ENCODE measurements at regions of chr1 and their contacts with region 1.

Region 1: DNA sequence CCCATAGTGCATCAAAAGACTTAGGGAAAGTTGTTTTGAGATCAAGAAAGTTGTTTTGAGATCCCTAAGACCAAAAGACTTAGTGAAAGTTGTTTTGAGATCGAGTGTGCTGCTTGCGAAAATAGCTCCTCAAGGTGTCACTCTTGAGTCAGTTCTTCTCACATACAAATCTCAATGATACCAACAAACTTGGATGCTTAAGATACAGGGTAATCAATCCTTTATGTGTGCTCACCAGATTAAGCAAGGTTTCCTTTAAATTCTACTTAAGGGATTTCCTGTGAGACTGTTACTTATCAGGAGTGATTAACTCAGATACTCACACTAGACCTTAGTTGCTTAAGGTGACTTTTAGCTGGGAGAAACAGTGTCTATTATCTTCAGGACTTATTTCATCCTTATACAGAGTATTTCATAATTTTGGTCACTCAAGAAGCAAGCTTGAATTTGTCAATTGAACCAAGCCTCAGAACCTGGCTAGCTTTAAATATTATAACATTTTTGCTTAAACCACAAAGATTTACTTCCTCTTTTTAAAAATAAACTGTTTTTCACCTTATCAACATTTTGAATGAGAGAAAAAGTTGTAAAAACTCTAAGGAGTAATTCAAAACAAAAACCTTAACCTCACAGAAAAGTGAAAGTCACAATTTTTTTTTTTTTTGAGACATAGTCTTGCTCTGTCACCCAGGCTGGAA is 8.0 kb upstream of the RLF start:
- DNase-seq: peak; percentile 52
- ATAC-seq: peak; percentile 82
- H3K4me3 Mint-ChIP-seq: peak overlapping the region; percentile 34
- H3K27ac Mint-ChIP-seq: peak overlapping the region; percentile 28
- H3K4me1 Mint-ChIP-seq: peaks cover 7% of the 10 kb centered on the region
- H3K27me3 Mint-ChIP-seq: no peaks in the 10 kb centered on the region
- CTCF ChIP-seq: peak; percentile 74

Region 2: DNA sequence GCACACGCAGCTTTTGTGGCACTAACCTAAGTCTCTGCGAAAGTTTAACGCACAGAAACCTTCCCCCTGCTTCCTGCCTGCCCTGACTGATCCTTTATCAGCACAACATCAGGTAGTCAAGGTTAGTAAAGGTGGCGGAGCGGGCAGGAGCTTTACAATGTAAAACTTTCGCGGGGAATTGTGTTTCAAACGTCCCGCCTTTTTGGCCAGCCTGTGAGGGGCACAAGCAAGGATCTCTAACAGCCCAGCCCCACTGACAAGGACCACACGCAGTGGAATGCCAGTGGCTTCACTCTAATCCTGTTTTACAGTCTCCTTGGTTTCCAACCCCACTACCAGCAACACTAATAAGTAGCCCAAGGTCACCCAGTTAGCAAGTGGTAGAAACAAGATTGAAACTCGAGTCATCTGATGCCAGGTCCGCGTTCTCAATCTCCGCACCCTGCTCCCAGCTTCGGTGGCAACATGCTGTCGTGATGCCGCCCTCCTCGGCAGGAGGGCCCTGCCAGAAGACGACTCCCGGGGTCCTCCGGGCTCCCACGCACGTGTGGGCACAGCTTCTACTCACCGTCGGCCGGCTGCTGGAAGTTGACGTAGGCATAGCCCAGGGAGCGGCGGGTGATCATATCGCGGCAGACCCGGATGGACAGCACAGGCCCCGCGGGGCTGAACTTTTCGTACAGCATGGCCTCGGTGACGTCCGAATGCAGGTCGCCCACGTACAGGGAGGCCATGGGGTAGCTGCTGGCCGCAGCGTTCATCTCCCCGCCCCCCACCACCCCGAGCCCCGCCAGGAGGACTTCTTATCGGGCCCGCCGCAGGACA is 577.8 kb before region 1 on chr1:
- CTCF ChIA-PET with region 1: no interaction called
- POLR2A ChIA-PET with region 1: no interaction called
- intact Hi-C with region 1: no loop called
- DNase-seq: peak; percentile 74
- ATAC-seq: peak; percentile 42
- H3K4me3 Mint-ChIP-seq: peak overlapping the region; percentile 86
- H3K27ac Mint-ChIP-seq: peak overlapping the region; percentile 91
- H3K4me1 Mint-ChIP-seq: peaks cover 42% of the 10 kb centered on the region
- H3K27me3 Mint-ChIP-seq: no peaks in the 10 kb centered on the region
- CTCF ChIP-seq: no peak

Region 3: DNA sequence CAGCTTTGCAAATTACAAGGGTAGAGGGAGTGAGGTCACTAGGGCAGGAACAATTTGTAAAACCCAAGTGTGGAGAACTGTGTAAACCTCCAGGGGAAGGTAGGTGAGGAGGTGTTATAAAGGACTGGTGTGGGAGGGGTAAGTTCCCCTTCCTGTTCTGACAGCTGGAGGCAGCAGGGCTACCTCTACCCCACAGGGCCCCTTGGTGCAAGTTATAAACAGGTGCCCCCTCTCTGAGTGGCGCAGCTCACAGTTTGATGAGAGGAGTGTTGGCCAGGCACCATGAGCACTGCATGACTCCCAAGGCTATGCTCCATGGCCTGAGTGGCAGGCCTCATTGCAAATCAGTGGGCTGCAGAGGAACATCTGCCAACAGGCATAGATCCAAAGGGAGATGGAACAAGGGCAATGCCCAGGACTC is 157.2 kb before region 1 on chr1:
- CTCF ChIA-PET with region 1: no interaction called
- POLR2A ChIA-PET with region 1: no interaction called
- intact Hi-C with region 1: no loop called
- DNase-seq: peak; percentile 41
- ATAC-seq: peak; percentile 97
- H3K4me3 Mint-ChIP-seq: no peak overlapping the region
- H3K27ac Mint-ChIP-seq: no peak overlapping the region
- H3K4me1 Mint-ChIP-seq: peaks cover 17% of the 10 kb centered on the region
- H3K27me3 Mint-ChIP-seq: no peaks in the 10 kb centered on the region
- CTCF ChIP-seq: no peak

Region 4: GRCh38 chr1:40171036-40171435 is 17.8 kb after region 1 on chr1:
- CTCF ChIA-PET with region 1: interaction called, 22 read pairs
- POLR2A ChIA-PET with region 1: no interaction called
- intact Hi-C with region 1: no loop called
- DNase-seq: no peak
- ATAC-seq: no peak
- H3K4me3 Mint-ChIP-seq: no peak overlapping the region
- H3K27ac Mint-ChIP-seq: no peak overlapping the region
- H3K4me1 Mint-ChIP-seq: peaks cover 46% of the 10 kb centered on the region
- H3K27me3 Mint-ChIP-seq: no peaks in the 10 kb centered on the region
- CTCF ChIP-seq: no peak

Region 5: DNA sequence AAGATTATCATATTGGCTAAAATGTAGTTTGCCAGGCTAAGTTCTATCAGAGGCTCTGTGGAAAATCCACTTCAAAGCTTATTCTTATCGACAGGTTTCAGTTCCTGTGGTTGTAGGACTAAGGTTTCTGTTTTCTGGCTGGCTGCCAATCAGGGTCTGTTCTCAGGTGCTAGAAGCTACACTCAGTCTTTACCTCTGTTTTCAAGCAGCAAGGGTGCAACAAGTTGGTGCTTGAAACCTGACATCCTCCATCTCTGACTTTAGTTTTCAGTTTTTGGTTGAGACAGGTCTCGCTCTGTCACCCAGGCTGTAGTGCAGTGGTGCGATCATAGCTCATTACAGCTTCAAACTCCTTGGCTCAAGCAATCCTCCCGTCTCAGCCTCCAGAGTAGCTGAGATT is 79.2 kb after region 1 on chr1:
- CTCF ChIA-PET with region 1: interaction called, 11 read pairs
- POLR2A ChIA-PET with region 1: no interaction called
- intact Hi-C with region 1: no loop called
- DNase-seq: peak; percentile 88
- ATAC-seq: peak; percentile 91
- H3K4me3 Mint-ChIP-seq: no peak overlapping the region
- H3K27ac Mint-ChIP-seq: peak overlapping the region; percentile 28
- H3K4me1 Mint-ChIP-seq: peaks cover 32% of the 10 kb centered on the region
- H3K27me3 Mint-ChIP-seq: no peaks in the 10 kb centered on the region
- CTCF ChIP-seq: no peak

Region 6: GRCh38 chr1:40281853-40282252 is 128.6 kb after region 1 on chr1:
- CTCF ChIA-PET with region 1: interaction called, 18 read pairs
- POLR2A ChIA-PET with region 1: no interaction called
- intact Hi-C with region 1: no loop called
- DNase-seq: no peak
- ATAC-seq: no peak
- H3K4me3 Mint-ChIP-seq: no peak overlapping the region
- H3K27ac Mint-ChIP-seq: no peak overlapping the region
- H3K4me1 Mint-ChIP-seq: no peaks in the 10 kb centered on the region
- H3K27me3 Mint-ChIP-seq: no peaks in the 10 kb centered on the region
- CTCF ChIP-seq: no peak

Region 7: GRCh38 chr1:40332695-40333094 is 179.5 kb after region 1 on chr1:
- CTCF ChIA-PET with region 1: interaction called, 331 read pairs
- POLR2A ChIA-PET with region 1: no interaction called
- intact Hi-C with region 1: no loop called
- DNase-seq: no peak
- ATAC-seq: no peak
- H3K4me3 Mint-ChIP-seq: no peak overlapping the region
- H3K27ac Mint-ChIP-seq: no peak overlapping the region
- H3K4me1 Mint-ChIP-seq: no peaks in the 10 kb centered on the region
- H3K27me3 Mint-ChIP-seq: no peaks in the 10 kb centered on the region
- CTCF ChIP-seq: no peak

Region 8: GRCh38 chr1:40438391-40439015 is 285.3 kb after region 1 on chr1:
- CTCF ChIA-PET with region 1: interaction called, 21 read pairs
- POLR2A ChIA-PET with region 1: interaction called, 4 read pairs
- intact Hi-C with region 1: no loop called
- DNase-seq: peak; percentile 37
- ATAC-seq: no peak
- H3K4me3 Mint-ChIP-seq: no peak overlapping the region
- H3K27ac Mint-ChIP-seq: no peak overlapping the region
- H3K4me1 Mint-ChIP-seq: peaks cover 2% of the 10 kb centered on the region
- H3K27me3 Mint-ChIP-seq: no peaks in the 10 kb centered on the region
- CTCF ChIP-seq: peak; percentile 82